AG04450 (cell line): ENCODE measurements at regions of chr11 and their contacts with region 1.

Region 1: GRCh38 chr11:47152953-47153950 is 23.4 kb downstream of the ARFGAP2 start:
- DNase-seq: peak; percentile 74
- H3K4me3 ChIP-seq: no peak overlapping the region
- H3K27ac ChIP-seq: no peak overlapping the region
- H3K27me3 ChIP-seq: no peaks in the 10 kb centered on the region
- CTCF ChIP-seq: peak; percentile 100

Region 2: DNA sequence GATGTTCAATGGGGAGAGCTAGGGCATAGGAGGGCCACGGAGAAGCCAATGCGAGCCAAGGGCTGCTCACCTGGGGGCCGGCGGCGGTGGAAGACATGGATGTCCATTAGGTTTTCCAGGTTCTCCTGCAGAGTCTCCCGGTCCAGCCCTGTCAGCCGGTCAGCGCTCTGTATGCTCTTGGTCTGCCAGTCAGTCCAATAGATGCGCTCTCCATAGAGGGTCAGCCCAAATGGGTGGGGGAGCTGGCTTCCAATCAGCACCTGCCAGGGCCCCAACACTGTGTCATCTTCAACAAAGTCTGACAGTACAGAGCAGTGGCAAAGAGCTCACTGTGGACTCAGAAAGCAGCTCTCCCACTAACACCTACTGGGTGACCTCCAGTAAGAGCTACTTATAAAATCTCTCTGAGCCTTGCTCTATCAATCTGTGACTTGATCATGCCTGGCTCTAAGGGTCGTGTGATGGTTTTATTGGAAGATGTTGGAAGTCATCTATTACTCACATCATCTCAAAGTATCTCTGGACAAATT is 274.1 kb before region 1 on chr11:
- CTCF ChIA-PET with region 1: interaction called, 18 read pairs
- POLR2A ChIA-PET with region 1: no interaction called
- DNase-seq: no peak
- H3K4me3 ChIP-seq: no peak overlapping the region
- H3K27ac ChIP-seq: no peak overlapping the region
- H3K27me3 ChIP-seq: no peaks in the 10 kb centered on the region
- CTCF ChIP-seq: no peak

Region 3: DNA sequence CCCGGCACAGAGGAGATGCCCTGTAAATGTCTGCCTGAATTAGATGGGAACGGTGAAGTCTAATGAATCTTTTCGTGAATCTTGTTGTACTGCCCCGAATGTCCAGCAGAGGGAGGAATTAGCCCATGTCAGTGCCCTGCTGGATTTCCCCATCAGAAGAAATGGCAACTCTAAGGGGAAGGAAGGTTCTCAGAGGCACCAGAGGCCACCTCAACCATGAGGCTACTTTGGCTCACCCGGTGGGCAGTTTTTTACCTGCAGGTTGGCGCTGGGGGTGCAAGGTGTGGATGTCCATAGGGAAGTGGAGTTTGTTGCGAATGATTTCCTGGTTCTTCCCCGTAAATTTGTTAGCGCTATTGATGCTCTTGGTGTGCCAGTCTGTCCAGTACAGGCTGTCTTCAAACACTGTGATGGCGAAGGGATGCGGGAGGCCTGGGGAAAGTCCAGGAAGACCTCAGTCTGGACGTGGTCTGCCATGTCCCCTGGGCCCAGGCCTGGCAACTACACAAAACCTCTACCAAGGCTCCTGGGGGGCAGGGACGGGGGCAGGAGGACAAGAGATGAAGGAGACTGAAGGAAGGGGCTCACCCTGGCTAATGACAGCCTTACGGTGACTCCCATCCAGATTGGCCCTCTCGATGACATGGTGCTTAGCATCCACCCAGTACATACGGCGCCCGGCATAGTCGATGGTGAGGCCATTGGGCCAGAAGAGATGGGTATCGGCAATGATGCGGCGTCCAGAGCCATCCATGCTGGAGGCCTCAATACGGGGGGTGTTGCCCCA is 263.4 kb before region 1 on chr11:
- CTCF ChIA-PET with region 1: interaction called, 73 read pairs
- POLR2A ChIA-PET with region 1: no interaction called
- DNase-seq: peak; percentile 39
- H3K4me3 ChIP-seq: no peak overlapping the region
- H3K27ac ChIP-seq: no peak overlapping the region
- H3K27me3 ChIP-seq: no peaks in the 10 kb centered on the region
- CTCF ChIP-seq: peak; percentile 90

Region 4: DNA sequence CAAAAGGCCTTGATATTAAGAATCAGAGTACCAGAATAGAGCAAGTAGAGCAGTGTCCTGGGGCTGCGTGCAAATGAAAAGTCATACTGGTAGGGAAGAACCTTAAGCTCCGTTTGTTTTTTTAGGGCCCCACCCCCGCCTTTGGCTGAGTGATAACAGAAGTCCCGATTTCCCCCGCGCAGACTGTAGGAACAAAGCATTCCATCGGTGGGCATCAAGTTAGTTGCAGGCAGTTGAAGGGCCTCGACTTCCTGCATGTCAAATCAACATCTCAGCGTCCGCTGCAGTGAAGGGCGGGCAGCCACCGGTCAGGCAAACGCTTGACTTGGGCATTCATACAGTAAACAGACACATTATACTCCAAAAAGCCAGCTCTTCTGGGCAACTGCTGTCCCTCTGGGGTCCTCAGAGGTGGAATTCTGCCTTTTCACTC is 246.6 kb before region 1 on chr11:
- CTCF ChIA-PET with region 1: interaction called, 18 read pairs
- POLR2A ChIA-PET with region 1: interaction called, 3 read pairs
- DNase-seq: no peak
- H3K4me3 ChIP-seq: no peak overlapping the region
- H3K27ac ChIP-seq: peak overlapping the region; percentile 11
- H3K27me3 ChIP-seq: no peaks in the 10 kb centered on the region
- CTCF ChIP-seq: no peak

Region 5: DNA sequence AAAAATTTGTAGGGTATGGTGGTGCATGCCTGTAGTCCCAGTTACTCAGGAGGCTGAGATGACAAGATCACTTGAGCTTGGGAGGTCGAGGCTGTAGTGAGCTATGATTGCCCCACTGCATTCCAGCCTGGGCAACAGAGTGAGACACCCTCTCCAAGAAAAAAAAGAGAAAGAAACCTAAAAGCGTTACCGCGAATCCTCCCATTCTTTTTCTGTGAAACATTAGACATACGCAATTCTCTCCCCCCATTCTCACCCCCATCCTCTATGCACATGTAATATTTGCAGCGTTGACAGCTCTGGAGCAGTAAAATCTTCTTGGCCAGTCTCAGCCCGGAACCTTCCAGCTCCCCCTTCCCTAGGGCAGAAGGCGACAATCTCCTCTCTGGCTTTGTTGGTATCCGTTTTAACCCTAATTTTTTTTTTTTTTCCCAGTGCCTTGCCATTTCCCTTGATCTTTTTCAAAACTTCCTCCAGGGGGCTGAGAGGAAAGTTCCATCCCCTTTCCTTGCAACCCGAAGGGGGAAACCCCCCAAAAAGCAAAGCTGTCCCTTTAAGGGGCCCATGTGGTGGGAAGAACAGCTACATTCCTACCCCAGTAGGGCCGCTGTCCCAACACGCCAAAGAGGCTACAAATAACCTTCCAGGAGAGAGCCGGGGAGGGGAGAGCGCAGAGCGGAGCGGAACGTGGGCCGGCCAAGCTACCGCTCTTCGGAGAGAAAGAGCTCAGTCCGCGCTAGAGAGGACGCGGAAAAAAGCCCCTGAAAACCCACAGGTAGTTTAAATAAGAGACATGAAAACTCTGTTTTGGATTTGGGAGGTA is 236.8 kb before region 1 on chr11:
- CTCF ChIA-PET with region 1: interaction called, 51 read pairs
- POLR2A ChIA-PET with region 1: interaction called, 4 read pairs
- DNase-seq: no peak
- H3K4me3 ChIP-seq: peak overlapping the region; percentile 65
- H3K27ac ChIP-seq: peak overlapping the region; percentile 57
- H3K27me3 ChIP-seq: no peaks in the 10 kb centered on the region
- CTCF ChIP-seq: peak; percentile 48

Region 6: GRCh38 chr11:47176328-47177228 is 23.3 kb after region 1 on chr11 and contains the start of gene ARFGAP2:
- CTCF ChIA-PET with region 1: no interaction called
- POLR2A ChIA-PET with region 1: no interaction called
- DNase-seq: peak; percentile 84
- H3K4me3 ChIP-seq: peak within 1 kb of the TSS; percentile 98
- H3K27ac ChIP-seq: peak within 1 kb of the TSS; percentile 89
- H3K27me3 ChIP-seq: no peaks in the 10 kb centered on the region
- CTCF ChIP-seq: no peak
- polyA plus RNA-seq, gene ARFGAP2: 38.6 and 44.4 TPM in 2 replicates

Region 7: GRCh38 chr11:47340980-47341775 is 187.9 kb after region 1 on chr11:
- CTCF ChIA-PET with region 1: no interaction called
- POLR2A ChIA-PET with region 1: no interaction called
- DNase-seq: no peak
- H3K4me3 ChIP-seq: no peak overlapping the region
- H3K27ac ChIP-seq: no peak overlapping the region
- H3K27me3 ChIP-seq: peaks cover 16% of the 10 kb centered on the region
- CTCF ChIP-seq: no peak